ENCODE measurements at regions of chr18 and their contacts with region 1.

Region 1: GRCh38 chr18:934518-935133 is 30.0 kb downstream of the ADCYAP1 start:
- DNase-seq: no peak
- H3K4me3 ChIP-seq: no peak overlapping the region
- H3K27ac ChIP-seq: no peak overlapping the region
- H3K4me1 ChIP-seq: no peaks in the 10 kb centered on the region
- H3K27me3 ChIP-seq: peaks cover 0 to 4% of the 10 kb centered on the region in 2 donors
- CTCF ChIP-seq: no peak
- POLR2A ChIP-seq: no peak

Region 2: GRCh38 chr18:666177-666576 is 268.4 kb before region 1 on chr18:
- intact Hi-C with region 1: no loop called
- DNase-seq: no peak
- H3K4me3 ChIP-seq: no peak overlapping the region
- H3K27ac ChIP-seq: no peak overlapping the region
- H3K4me1 ChIP-seq: no peaks in the 10 kb centered on the region
- H3K27me3 ChIP-seq: no peaks in the 10 kb centered on the region
- CTCF ChIP-seq: no peak
- POLR2A ChIP-seq: no peak

Region 3: GRCh38 chr18:830315-830901 is 104.2 kb before region 1 on chr18:
- intact Hi-C with region 1: no loop called
- DNase-seq: no peak
- H3K4me3 ChIP-seq: no peak overlapping the region
- H3K27ac ChIP-seq: no peak overlapping the region
- H3K4me1 ChIP-seq: no peaks in the 10 kb centered on the region
- H3K27me3 ChIP-seq: no peaks in the 10 kb centered on the region
- CTCF ChIP-seq: no peak
- POLR2A ChIP-seq: no peak

Region 4: GRCh38 chr18:887716-888115 is 46.9 kb before region 1 on chr18:
- intact Hi-C with region 1: no loop called
- DNase-seq: no peak
- H3K4me3 ChIP-seq: no peak overlapping the region
- H3K27ac ChIP-seq: no peak overlapping the region
- H3K4me1 ChIP-seq: no peaks in the 10 kb centered on the region
- H3K27me3 ChIP-seq: peaks cover 0 to 4% of the 10 kb centered on the region in 2 donors
- CTCF ChIP-seq: no peak
- POLR2A ChIP-seq: no peak

Region 5: DNA sequence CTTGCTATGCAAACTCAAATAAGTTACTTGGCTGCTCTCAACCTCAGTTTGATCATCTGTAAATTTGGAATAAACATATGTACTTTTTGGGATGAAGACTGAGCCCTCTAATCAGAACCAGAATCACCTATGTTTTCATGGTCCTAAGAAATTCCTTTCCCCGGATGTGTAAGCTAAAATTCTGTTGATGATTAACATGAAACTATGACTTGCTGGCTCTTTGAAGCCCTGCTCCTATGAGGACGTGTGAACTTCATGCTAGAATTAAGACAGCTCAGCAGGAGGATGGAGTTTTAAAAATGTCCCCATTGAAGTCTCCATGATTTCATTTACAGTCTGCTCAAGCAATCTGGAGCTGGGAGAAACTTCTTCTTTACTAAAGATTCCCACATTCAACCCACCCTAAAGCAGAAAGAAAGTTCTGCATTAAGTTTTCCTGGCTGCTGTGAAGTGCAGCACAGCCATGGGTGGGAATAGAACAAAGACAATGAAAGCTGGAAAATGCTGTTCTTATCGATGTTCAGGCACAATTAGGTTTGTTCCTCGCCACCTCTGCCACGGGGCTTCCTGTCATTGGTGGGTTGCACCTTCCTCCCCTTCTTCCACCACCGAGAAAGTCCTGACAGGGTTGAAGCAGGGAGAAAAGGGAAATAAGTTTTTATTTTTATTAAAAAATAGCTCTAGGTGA is 20.9 kb after region 1 on chr18:
- intact Hi-C with region 1: loop called (anchors 2 kb)
- DNase-seq: no peak
- H3K4me3 ChIP-seq: no peak overlapping the region
- H3K27ac ChIP-seq: no peak overlapping the region
- H3K4me1 ChIP-seq: no peaks in the 10 kb centered on the region
- H3K27me3 ChIP-seq: no peaks in the 10 kb centered on the region
- CTCF ChIP-seq: no peak
- POLR2A ChIP-seq: no peak